ENCODE measurements at regions of chr4 and their contacts with region 1.

Region 1: GRCh38 chr4:98406819-98407218 is 145.6 kb downstream of the RAP1GDS1 start:
- ATAC-seq: no peak
- H3K4me3 ChIP-seq: no peak overlapping the region
- H3K27ac ChIP-seq: no peak overlapping the region
- H3K4me1 ChIP-seq: no peaks in the 10 kb centered on the region

Region 2: GRCh38 chr4:98150092-98150761 is 256.6 kb before region 1 on chr4:
- in situ Hi-C with region 1: loop called in 1 of 9 experiments (anchors 25 kb)
- ATAC-seq: no peak
- H3K4me3 ChIP-seq: no peak overlapping the region
- H3K27ac ChIP-seq: no peak overlapping the region
- H3K4me1 ChIP-seq: no peaks in the 10 kb centered on the region

Region 3: DNA sequence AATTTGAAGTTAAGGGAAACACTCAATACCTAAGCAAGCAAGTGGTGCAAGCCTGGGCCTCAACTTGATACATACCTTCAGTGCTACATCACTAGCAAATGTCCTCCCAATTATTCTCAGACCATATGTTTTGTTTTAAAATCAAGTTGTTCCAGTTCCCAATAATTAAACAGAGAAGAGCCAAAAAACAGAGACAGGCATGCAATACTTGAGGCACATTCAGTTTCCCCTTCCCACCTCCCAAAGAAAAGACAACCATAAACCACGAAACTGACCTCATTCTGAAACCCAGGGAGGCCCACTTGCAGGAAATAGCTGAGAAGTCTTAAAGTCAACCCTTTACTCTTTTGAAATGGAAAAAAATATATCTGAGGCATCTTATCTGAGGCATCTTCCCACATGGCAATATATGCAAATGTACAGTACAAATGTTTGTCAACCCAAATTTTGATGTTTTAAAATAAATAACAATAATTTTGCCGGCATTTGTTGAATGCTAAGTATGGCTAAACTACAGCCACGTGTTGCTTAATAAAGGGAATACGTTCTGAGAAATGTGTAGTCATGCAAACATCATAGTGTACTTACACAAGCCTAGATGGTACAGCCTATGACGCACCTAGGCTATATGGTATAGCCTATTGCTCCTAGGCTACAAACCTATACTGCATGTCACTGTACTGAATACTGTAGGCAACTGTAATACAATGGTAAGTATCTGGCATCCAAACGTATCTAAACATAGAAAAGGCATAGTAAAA is 104.1 kb after region 1 on chr4:
- in situ Hi-C with region 1: no loop called
- ATAC-seq: no peak
- H3K4me3 ChIP-seq: no peak overlapping the region
- H3K27ac ChIP-seq: no peak overlapping the region
- H3K4me1 ChIP-seq: peaks cover 28 to 44% of the 10 kb centered on the region in 2 donors

Region 4: GRCh38 chr4:98546910-98547594 is 140.2 kb after region 1 on chr4:
- in situ Hi-C with region 1: no loop called
- ATAC-seq: peak; percentile 80 to 94 (median 86)
- H3K4me3 ChIP-seq: peak overlapping the region in 2 of 5 donors; percentile 7 to 12
- H3K27ac ChIP-seq: peak overlapping the region; percentile 17 to 27
- H3K4me1 ChIP-seq: peaks cover 15% of the 10 kb centered on the region in 2 donors